HEK293 (cell line): ENCODE measurements at regions of chr7 and their contacts with region 1.

Region 1: DNA sequence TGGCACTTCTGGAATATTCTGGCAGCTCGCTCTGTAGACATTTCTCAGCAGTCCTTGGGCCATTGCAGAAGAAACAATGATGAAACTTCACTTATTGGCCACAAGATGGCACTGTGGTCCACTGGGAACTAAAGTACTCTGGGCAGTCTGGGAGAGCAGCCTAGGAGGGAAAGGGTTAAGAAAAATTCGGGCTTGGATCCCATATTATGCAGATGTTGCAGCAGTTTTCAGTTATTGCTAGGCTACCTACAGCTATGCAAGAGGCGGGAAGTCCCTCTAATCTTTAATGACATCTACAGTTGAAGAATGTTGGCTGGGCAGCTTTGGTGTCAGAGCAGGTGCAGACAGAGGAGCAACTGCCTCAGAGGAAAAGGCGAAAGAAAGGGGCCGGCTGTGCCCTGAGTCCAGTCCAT is 201.7 kb upstream of the PRSS58 start:
- H3K4me3 ChIP-seq: no peak overlapping the region
- H3K27ac ChIP-seq: no peak overlapping the region
- H3K4me1 ChIP-seq: no peaks in the 10 kb centered on the region
- CTCF ChIP-seq: peak; percentile 59; the same call in 1 of the 2 replicates

Region 2: DNA sequence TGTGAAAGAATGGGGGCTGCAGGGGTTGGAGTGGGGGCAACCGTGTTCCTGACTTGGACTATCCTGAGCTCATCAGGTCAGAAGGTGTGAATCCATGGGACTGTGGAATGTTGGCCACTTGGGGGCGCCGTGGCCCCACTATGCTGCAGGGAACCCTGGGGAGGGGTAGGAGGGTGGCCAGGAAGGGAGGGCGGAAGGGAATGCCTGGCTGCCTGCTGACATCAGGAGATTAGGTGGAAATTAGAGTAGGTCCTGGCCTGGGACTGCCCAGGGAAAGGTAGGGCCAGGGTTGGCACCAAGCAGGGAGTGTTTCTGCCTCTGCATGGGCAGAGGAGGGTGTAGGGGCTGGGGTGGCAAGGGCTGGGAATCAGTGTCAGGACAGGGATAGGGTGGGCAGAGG is 135.9 kb before region 1 on chr7:
- CTCF ChIA-PET with region 1: no interaction called
- POLR2A ChIA-PET with region 1: no interaction called
- H3K4me3 ChIP-seq: no peak overlapping the region
- H3K27ac ChIP-seq: no peak overlapping the region
- H3K4me1 ChIP-seq: no peaks in the 10 kb centered on the region
- CTCF ChIP-seq: peak; percentile 64; the same call in 1 of the 2 replicates

Region 3: DNA sequence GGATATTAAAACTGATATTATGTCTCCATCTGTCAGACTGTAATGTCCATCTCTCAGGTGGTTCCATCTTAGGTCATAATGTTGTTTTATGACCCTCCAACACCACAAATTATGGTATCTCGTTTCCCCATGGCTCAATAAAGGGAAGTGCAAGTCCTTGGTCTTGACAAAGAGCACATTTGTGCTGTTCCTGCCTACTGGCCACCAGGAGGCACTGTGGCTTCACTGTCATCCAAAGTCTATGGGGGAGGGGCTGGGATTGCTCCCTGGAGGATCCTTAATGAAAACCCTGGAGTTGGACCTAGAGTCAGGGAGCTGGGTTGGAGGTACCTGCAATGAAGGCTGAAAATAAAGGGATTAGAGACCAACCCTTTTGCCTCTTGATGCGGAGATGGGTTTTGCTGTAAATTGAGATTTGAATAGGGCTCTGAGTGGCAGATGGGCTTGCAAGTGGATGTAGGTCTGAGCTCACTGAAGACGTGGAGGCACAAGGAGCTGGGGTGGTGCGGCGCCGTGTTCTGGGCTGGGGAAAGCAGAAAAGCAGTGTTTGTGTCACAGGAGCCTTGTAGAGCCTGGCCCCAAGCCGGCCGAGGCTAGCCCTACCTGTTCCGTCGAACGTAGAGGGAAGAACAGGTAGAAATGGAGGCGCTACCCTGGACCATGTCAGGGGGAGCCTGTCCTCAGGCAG is 21.2 kb before region 1 on chr7:
- CTCF ChIA-PET with region 1: interaction called, 32 read pairs
- POLR2A ChIA-PET with region 1: no interaction called
- H3K4me3 ChIP-seq: no peak overlapping the region
- H3K27ac ChIP-seq: no peak overlapping the region
- H3K4me1 ChIP-seq: no peaks in the 10 kb centered on the region
- CTCF ChIP-seq: peak; percentile 30; the same call in 1 of the 2 replicates

Region 4: GRCh38 chr7:142445019-142445686 is 14.4 kb before region 1 on chr7:
- CTCF ChIA-PET with region 1: interaction called, 32 read pairs
- POLR2A ChIA-PET with region 1: no interaction called
- H3K4me3 ChIP-seq: no peak overlapping the region
- H3K27ac ChIP-seq: no peak overlapping the region
- H3K4me1 ChIP-seq: no peaks in the 10 kb centered on the region
- CTCF ChIP-seq: no peak

Region 5: GRCh38 chr7:142478479-142479072 is 19.0 kb after region 1 on chr7:
- CTCF ChIA-PET with region 1: interaction called, 276 read pairs
- POLR2A ChIA-PET with region 1: interaction called, 3 read pairs
- H3K4me3 ChIP-seq: no peak overlapping the region
- H3K27ac ChIP-seq: no peak overlapping the region
- H3K4me1 ChIP-seq: no peaks in the 10 kb centered on the region
- CTCF ChIP-seq: no peak

Region 6: DNA sequence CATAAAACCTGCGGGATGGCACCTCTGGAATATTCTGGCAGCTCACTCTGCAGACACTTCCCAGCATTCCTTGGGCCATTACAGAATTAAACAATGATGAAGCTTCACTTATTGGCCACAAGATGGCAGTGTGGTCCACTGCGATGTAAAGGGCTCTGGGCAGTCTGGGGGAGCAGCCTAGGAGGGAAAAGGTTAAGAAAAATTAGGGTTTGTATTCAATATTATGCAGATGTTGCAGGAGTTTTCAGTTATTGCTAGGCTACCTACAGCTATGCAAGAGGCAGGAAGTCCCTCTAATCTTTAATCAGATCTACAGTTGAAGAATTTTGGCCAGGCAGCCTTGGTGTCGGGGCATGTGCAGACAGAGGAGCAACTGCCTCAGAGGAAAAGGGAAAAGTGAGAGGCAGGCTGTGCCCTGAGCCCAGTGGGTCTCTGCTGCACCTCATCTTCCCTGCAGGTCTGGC is 56.5 kb after region 1 on chr7:
- CTCF ChIA-PET with region 1: interaction called, 34 read pairs
- POLR2A ChIA-PET with region 1: no interaction called
- H3K4me3 ChIP-seq: no peak overlapping the region
- H3K27ac ChIP-seq: no peak overlapping the region
- H3K4me1 ChIP-seq: no peaks in the 10 kb centered on the region
- CTCF ChIP-seq: peak; percentile 43; the same call in 1 of the 2 replicates

Region 7: GRCh38 chr7:142523821-142524460 is 64.4 kb after region 1 on chr7:
- CTCF ChIA-PET with region 1: interaction called, 34 read pairs
- POLR2A ChIA-PET with region 1: no interaction called
- H3K4me3 ChIP-seq: no peak overlapping the region
- H3K27ac ChIP-seq: no peak overlapping the region
- H3K4me1 ChIP-seq: no peaks in the 10 kb centered on the region
- CTCF ChIP-seq: no peak